ENCODE measurements at regions of chr17 and their contacts with region 1.

Region 1: DNA sequence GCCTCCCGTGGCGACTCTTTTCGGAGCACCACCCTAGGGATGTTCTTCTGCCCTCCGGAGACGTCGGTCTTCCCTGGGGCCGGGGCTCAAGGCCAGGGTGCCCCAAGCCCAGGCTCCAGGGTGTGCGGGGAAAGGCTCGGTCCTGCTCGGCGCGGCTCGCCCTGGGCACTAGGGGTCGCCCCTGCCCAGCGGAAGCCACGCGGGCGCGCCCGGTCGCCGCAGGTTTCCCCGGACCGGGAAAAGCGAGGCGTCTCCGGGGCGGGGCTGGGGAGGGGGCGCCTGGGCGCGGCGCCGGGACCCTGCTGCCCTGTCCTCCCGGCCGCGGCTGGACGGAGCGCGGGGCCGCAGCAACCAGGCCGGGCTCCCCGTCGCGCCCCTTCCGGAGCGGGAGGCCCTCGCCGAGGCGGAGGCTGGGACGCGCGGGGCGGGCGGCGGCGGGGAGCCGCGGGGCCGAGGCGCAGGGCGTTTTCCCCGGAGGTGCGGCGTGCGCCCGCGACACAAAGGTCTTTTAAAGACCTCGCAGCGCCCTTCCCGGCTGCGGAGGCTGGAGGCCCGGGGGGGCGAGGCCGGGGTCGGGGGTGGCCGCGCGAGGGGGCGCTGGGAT is 76.4 kb downstream of the MRC2 start:
- DNase-seq: peak; percentile 69 to 80 (median 74)
- ATAC-seq: peak; percentile 85
- H3K4me3 ChIP-seq: peak overlapping the region; percentile 37 to 40
- H3K27ac ChIP-seq: peak overlapping the region in 3 of 4 donors; percentile 57 to 71 (median 61)
- H3K4me1 ChIP-seq: peaks cover 29% of the 10 kb centered on the region
- H3K27me3 ChIP-seq: no peaks in the 10 kb centered on the region
- CTCF ChIP-seq: peak; percentile 67 to 94 (median 87)
- POLR2A ChIP-seq: no peak

Region 2: DNA sequence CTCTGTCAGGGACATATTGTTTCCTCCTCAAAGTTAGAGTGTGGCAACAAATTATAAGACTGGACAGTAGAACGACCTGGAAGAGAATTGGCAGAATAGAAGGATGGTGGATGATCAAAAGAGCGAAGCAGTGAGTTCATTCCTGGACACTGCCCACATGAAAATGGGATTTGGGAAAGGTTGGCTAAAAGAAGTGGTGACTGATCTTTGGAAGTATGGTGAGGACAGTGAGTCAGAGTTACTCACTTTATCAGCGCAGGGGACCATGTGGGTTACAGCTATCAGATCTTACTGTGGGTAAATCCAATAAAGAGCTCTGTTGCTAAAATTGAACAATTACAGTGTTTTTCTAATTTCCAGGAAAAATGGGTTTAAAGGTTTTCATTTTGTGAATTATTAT is 259.4 kb after region 1 on chr17:
- intact Hi-C with region 1: loop called (anchors 5 kb)
- DNase-seq: no peak
- ATAC-seq: no peak
- H3K4me3 ChIP-seq: no peak overlapping the region
- H3K27ac ChIP-seq: no peak overlapping the region
- H3K4me1 ChIP-seq: peaks cover 16% of the 10 kb centered on the region
- H3K27me3 ChIP-seq: no peaks in the 10 kb centered on the region
- CTCF ChIP-seq: no peak
- POLR2A ChIP-seq: no peak

Region 3: DNA sequence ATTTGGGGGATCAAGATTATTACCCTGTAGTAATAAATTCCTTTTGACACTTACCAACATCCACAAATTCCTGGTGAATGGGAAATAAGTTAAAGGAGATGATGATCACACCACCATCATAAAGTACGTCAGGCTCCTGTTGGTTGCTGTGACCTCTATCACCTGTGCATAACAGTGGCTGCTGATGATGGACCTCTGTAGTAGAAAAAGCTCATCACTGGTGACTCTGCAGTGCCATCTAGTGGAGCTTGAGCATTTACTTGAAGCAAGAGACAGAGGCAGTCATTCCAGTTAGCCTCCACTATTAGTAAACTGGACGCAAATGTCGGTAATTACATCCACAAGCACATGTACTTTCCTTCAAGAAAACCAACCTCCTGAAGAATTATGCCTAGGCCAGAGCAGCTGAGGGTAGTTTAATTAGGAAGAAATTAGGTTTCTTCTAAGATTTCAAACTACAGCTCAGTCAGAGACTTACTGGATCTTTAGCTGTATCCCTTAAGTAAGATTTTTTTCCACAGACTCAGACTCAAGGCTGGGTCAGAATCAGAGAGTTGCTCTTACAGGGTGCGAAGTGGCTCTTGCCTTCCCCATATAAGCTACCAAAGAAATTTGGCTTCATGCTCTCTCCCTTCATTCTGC is 702.9 kb after region 1 on chr17:
- intact Hi-C with region 1: loop called (anchors 10 kb)
- DNase-seq: peak; percentile 81 to 90 (median 82)
- ATAC-seq: peak; percentile 83
- H3K4me3 ChIP-seq: no peak overlapping the region
- H3K27ac ChIP-seq: no peak overlapping the region
- H3K4me1 ChIP-seq: no peaks in the 10 kb centered on the region
- H3K27me3 ChIP-seq: no peaks in the 10 kb centered on the region
- CTCF ChIP-seq: peak; percentile 76 to 90 (median 86)
- POLR2A ChIP-seq: no peak

Measured in body of pancreas (tissue), 4 donors.